ENCODE measurements at regions of chr18 and their contacts with region 1.

Region 1: DNA sequence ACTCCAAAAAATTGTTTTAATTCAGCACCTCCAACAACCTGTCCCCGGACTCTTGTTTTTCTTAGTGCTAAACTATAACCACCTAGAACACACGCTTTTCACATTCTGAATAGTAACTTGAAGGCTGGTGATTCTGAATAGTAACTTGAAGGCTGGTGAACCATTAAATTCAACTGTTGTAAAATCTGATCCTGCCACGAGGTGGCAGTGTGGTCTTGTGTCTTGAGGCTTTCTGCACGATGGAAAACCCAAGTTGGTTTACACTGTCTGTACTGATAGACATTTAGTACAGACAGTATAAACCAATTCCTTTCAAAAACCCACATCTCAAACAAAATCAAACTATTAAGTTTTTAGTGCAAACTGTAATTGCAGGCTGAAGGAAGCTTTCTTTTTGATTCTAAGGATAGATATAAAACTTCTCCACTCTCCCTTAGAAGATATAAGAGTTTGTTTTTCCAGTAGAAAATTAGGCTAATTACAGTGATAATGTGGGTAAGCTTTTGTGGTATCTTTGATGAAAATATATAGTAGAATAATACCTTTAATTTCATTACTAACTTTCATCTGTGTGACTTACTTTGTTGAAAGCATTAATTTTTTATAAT is 57.6 kb downstream of the VAPA start:
- DNase-seq: peak; percentile 89
- H3K4me3 ChIP-seq: no peak overlapping the region
- H3K27ac ChIP-seq: peak overlapping the region; percentile 16
- H3K4me1 ChIP-seq: peaks cover 16% of the 10 kb centered on the region
- H3K27me3 ChIP-seq: no peaks in the 10 kb centered on the region
- CTCF ChIP-seq: peak; percentile 83

Region 2: DNA sequence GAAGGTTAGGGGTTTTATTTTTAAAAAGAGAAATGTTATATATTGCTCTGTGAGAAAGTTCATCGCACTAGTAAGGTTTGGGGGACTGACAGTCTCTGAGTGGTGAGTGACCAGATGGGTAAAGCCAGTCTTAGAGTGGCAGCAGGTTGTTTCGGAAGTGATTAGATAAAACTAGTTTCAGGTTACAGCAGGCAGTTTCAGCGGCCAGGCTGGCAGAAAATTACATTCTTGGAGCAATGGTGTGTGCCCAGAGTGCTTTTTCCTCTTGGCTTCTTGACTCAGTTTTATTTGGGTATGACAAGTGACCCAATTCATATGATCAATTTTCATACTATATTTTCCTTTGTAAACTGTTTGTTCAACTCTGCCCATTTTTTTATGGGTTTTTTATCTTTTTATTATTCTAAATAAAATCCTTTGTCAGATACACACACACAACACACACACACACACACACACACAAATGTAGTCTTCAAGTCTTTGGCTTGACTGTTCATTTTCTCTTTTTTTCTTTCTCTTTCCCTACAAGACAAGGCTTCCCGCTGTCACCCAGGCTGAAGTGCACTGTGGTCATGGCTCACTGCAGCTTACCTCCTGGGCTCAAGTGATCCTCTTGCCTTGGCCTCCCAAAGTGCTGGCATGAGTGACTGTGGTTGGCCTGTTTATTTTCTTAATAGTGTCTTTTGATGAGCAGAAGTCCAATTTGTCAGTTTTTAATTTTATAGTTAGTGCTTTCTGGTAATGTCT is 465.2 kb before region 1 on chr18:
- CTCF ChIA-PET with region 1: no interaction called
- POLR2A ChIA-PET with region 1: no interaction called
- intact Hi-C with region 1: no loop called
- DNase-seq: no peak
- H3K4me3 ChIP-seq: no peak overlapping the region
- H3K27ac ChIP-seq: no peak overlapping the region
- H3K4me1 ChIP-seq: no peaks in the 10 kb centered on the region
- H3K27me3 ChIP-seq: no peaks in the 10 kb centered on the region
- CTCF ChIP-seq: no peak

Region 3: GRCh38 chr18:9987931-9988330 is 16.5 kb after region 1 on chr18:
- CTCF ChIA-PET with region 1: no interaction called
- POLR2A ChIA-PET with region 1: no interaction called
- intact Hi-C with region 1: no loop called
- DNase-seq: no peak
- H3K4me3 ChIP-seq: no peak overlapping the region
- H3K27ac ChIP-seq: no peak overlapping the region
- H3K4me1 ChIP-seq: no peaks in the 10 kb centered on the region
- H3K27me3 ChIP-seq: no peaks in the 10 kb centered on the region
- CTCF ChIP-seq: no peak

Region 4: GRCh38 chr18:10059610-10060468 is 88.4 kb after region 1 on chr18:
- CTCF ChIA-PET with region 1: no interaction called
- POLR2A ChIA-PET with region 1: no interaction called
- intact Hi-C with region 1: loop called (anchors 2 kb)
- DNase-seq: peak; percentile 65
- H3K4me3 ChIP-seq: no peak overlapping the region
- H3K27ac ChIP-seq: peak overlapping the region; percentile 88
- H3K4me1 ChIP-seq: peaks cover 58% of the 10 kb centered on the region
- H3K27me3 ChIP-seq: no peaks in the 10 kb centered on the region
- CTCF ChIP-seq: no peak

Region 5: DNA sequence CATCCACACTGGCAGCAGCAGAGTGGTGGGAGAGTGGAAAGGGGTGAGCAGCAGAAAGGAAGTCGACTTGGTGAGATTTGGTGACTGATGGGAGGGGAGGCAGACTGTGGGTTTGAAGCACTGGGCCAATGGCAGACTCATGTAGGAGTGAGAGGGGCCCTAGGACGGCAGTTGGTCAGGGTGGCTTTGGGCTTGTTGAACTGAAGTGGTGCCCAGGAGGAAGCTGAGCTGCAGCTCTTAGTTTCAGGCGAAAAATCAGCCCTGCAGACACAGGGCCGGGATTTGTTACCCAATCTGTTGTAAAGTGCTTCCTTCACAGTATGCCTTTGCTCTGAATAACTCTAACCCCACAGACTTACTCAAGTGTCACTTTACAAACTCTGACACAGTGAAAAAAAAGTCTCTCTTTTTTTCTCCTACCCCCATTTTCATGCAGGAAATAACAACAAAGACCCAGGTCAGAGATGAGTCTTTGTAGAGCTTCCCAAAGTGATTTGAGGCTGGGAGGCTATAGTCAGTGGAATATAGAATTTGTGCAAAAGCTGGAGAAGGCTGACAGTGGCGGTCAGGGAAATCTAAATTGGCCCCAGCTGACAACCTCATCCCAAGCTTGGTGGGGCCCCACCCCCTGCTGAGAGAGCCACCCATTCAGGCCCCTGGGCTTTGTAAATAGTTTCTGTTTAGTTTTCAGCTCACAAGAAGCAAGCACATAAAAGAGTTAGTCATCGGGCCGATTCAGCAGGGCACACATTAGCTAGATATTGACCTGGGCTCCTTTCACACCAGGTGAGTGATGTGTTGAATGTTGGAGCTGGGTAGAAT is 169.3 kb after region 1 on chr18:
- CTCF ChIA-PET with region 1: no interaction called
- POLR2A ChIA-PET with region 1: no interaction called
- intact Hi-C with region 1: no loop called
- DNase-seq: peak; percentile 9
- H3K4me3 ChIP-seq: no peak overlapping the region
- H3K27ac ChIP-seq: no peak overlapping the region
- H3K4me1 ChIP-seq: peaks cover 6% of the 10 kb centered on the region
- H3K27me3 ChIP-seq: no peaks in the 10 kb centered on the region
- CTCF ChIP-seq: no peak

Region 6: DNA sequence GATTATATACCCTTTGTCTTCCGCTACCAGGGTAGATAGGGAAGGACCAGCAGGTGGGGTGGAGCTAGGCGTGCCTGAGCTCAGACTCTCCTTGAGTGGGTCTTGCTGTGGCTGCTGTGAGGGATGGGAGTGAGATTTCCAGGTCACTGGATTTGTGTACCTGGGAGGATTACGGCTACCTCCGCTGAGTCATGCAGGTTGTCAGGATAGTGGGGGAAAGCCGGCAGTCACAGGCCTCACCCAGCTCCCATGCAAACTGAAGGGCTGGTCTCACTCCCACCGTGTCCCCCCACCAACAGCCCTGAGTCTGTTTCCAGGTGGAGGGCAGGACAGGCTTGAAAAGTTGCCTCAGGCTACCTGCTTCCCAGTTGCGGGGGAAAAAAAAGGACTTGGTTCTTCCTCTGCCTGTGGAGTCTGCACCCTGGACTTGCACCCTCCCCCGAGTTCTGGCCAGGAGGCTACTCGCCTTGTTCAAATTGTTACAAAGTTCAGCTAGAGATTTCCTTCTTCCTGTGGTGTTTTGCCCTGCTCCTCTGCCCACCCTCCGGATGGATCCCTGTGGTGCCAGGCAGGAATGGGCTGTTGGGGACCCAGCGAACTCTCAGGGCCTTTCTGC is 210.7 kb after region 1 on chr18:
- CTCF ChIA-PET with region 1: no interaction called
- POLR2A ChIA-PET with region 1: no interaction called
- intact Hi-C with region 1: no loop called
- DNase-seq: peak; percentile 10
- H3K4me3 ChIP-seq: no peak overlapping the region
- H3K27ac ChIP-seq: no peak overlapping the region
- H3K4me1 ChIP-seq: no peaks in the 10 kb centered on the region
- H3K27me3 ChIP-seq: no peaks in the 10 kb centered on the region
- CTCF ChIP-seq: no peak

Region 7: GRCh38 chr18:10247021-10247741 is 275.8 kb after region 1 on chr18:
- CTCF ChIA-PET with region 1: no interaction called
- POLR2A ChIA-PET with region 1: no interaction called
- intact Hi-C with region 1: loop called (anchors 5 kb)
- DNase-seq: no peak
- H3K4me3 ChIP-seq: no peak overlapping the region
- H3K27ac ChIP-seq: no peak overlapping the region
- H3K4me1 ChIP-seq: peaks cover 23% of the 10 kb centered on the region
- H3K27me3 ChIP-seq: no peaks in the 10 kb centered on the region
- CTCF ChIP-seq: no peak

Region 8: DNA sequence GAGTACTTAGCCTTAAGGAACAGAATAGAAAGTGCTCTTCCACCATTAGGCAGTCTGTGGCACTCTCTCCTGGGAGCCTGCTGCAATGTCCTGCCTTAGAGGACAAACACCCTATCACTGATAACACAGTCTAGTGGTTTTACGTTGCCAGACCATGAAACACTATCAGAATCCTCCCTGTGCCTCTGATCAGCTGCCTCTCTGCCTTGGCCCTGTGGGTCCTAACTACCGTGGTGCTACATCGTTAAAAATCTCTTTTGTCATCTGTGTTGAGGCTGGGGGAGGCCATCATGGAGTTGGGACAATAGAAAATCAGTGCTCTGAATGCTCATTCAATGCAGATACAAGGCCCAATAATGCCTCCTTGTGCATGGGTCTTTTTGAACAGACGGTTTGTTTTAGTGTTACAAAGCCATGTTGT is 471.1 kb after region 1 on chr18:
- CTCF ChIA-PET with region 1: no interaction called
- POLR2A ChIA-PET with region 1: no interaction called
- intact Hi-C with region 1: loop called (anchors 5 kb)
- DNase-seq: peak; percentile 42
- H3K4me3 ChIP-seq: no peak overlapping the region
- H3K27ac ChIP-seq: no peak overlapping the region
- H3K4me1 ChIP-seq: peaks cover 27% of the 10 kb centered on the region
- H3K27me3 ChIP-seq: peaks cover 28% of the 10 kb centered on the region
- CTCF ChIP-seq: peak; percentile 38; the same call in 1 of the 2 replicates

Region 9: GRCh38 chr18:10519999-10520935 is 548.9 kb after region 1 on chr18:
- CTCF ChIA-PET with region 1: interaction called, 12 read pairs
- POLR2A ChIA-PET with region 1: no interaction called
- intact Hi-C with region 1: loop called (anchors 1 kb)
- DNase-seq: peak; percentile 97
- H3K4me3 ChIP-seq: no peak overlapping the region
- H3K27ac ChIP-seq: peak overlapping the region; percentile 87
- H3K4me1 ChIP-seq: peaks cover 29% of the 10 kb centered on the region
- H3K27me3 ChIP-seq: no peaks in the 10 kb centered on the region
- CTCF ChIP-seq: peak; percentile 94

Region 10: GRCh38 chr18:11149441-11150270 is 1178.2 kb after region 1 on chr18 and contains the start of gene PIEZO2:
- CTCF ChIA-PET with region 1: no interaction called
- POLR2A ChIA-PET with region 1: no interaction called
- intact Hi-C with region 1: loop called (anchors 10 kb)
- DNase-seq: peak; percentile 81
- H3K4me3 ChIP-seq: peak within 1 kb of the TSS; percentile 39
- H3K27ac ChIP-seq: no peak within 1 kb of the TSS
- H3K4me1 ChIP-seq: peaks cover 17% of the 10 kb centered on the region
- H3K27me3 ChIP-seq: peaks cover 52% of the 10 kb centered on the region
- CTCF ChIP-seq: no peak
- total RNA-seq, gene PIEZO2: 5.5 and 8.8 TPM in 2 replicates